ENCODE measurements at regions of chr13 and their contacts with region 1.

Region 1: DNA sequence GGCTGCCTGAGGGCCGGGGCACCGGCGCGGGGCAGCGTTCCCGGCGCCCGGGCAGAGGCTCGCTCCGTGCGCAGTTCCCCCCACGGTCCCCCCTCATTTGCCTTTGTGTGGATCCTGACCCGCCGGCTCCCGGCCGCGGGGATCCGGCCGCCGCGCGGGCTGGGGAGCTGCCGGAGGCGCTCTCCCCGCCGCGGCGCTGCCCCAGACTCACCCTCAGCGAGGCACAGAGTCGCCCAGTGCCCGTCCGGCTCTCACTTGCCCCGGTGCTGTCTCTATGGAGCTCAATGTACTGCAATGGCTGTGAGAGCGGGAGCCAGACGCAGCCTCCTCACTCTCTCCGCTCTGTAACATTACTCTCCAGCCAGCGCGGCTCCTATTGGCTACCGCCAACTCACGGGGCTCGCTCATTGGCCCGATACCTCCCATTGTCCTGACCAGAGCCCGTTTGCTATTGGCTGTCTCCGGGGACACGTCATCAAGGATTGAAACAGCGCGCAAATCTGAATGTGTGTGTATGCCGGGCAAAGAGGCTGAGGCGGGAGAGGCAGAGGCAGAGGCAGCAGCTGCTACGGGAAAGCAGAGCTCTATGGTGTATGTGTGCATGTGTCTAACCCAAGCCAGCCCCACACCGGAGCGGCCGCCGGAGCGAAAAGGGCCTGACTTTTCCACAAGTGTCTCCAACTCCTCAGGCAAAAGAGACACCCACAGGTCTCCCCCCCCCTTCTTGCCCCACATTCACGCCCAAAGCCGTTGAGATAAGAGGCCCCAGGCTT is at the start of gene HMGB1:
- DNase-seq: peak; percentile 97
- H3K4me3 Mint-ChIP-seq: peak within 1 kb of the TSS; percentile 94
- H3K27ac Mint-ChIP-seq: peak within 1 kb of the TSS; percentile 100
- H3K4me1 Mint-ChIP-seq: peaks cover 28% of the 10 kb centered on the region
- H3K27me3 Mint-ChIP-seq: no peaks in the 10 kb centered on the region
- total RNA-seq, gene HMGB1: 593 and 606 TPM in 2 replicates

Region 2: DNA sequence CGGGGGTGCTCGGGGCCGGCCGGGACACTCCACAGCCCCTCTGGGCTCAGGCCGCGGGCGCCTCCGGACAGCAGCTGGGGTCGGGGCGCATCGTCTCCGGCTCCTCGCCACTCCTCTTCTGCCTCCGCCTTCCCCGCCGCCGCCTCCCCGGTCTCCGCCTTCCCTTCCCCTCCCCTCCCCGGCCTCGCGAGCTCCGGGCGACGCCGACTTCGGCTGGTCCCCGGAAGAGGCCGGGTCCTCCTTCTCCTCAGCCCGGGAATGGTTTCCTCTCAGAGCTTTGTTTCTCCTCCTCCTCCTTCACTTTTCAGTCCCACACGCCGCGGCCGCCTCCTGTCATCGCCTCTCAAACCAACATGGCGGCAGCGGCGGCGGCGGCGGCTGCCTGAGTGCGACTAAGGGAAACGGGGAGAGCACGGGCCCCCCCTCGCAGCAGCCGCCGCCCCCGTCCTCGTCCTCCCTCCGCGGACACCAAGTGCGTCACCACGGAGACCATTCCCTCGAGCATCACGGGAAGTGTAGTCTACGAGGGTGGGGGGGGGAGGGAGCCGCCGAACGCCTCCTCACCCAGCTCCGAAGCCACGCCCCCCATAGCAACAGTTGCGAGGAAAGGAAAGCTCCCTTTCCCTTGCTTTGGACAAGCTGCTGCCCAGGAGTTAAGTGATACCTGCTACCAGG is 615.4 kb before region 1 on chr13 and contains the start of gene UBL3:
- intact Hi-C with region 1: loop called (anchors 2 kb)
- DNase-seq: peak; percentile 90
- H3K4me3 Mint-ChIP-seq: peak within 1 kb of the TSS; percentile 97
- H3K27ac Mint-ChIP-seq: peak within 1 kb of the TSS; percentile 98
- H3K4me1 Mint-ChIP-seq: peaks cover 50% of the 10 kb centered on the region
- H3K27me3 Mint-ChIP-seq: no peaks in the 10 kb centered on the region
- total RNA-seq, gene UBL3: 10.9 and 12.8 TPM in 2 replicates

Region 3: DNA sequence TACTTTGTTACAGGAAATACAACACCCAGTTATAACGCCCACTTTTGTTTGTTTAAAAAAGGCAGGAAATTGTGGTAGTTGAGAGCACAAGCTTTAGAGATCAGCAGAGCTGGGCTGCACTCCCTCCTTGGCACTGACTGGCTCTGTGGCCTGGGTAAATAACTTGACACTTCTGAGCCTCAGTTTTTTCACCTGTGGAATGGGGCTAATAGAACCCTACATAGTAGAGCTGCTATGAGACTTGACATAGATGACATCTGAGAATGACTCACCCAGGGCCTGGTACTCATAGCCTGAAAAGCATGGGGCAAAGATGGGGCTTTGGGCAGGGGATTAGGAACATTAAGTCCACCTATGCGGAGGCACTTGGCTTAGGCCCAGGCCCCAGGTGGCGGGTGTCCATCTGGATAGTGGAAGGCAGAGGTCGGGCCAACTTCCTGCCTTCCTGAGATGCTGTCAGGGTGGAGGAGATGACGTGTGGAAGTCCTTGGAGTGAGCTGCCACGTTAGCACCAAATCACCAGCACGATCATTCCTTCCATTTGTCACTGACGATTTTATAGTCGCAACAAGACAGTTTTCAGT is 317.5 kb before region 1 on chr13:
- intact Hi-C with region 1: loop called (anchors 1 kb)
- DNase-seq: peak; percentile 31
- H3K4me3 Mint-ChIP-seq: peak overlapping the region; percentile 65
- H3K27ac Mint-ChIP-seq: peak overlapping the region; percentile 83
- H3K4me1 Mint-ChIP-seq: peaks cover 96% of the 10 kb centered on the region
- H3K27me3 Mint-ChIP-seq: no peaks in the 10 kb centered on the region

Region 4: GRCh38 chr13:30370146-30370545 is 95.6 kb before region 1 on chr13:
- intact Hi-C with region 1: no loop called
- DNase-seq: no peak
- H3K4me3 Mint-ChIP-seq: peak overlapping the region; percentile 25
- H3K27ac Mint-ChIP-seq: peak overlapping the region; percentile 53
- H3K4me1 Mint-ChIP-seq: peaks cover 76% of the 10 kb centered on the region
- H3K27me3 Mint-ChIP-seq: no peaks in the 10 kb centered on the region

Region 5: DNA sequence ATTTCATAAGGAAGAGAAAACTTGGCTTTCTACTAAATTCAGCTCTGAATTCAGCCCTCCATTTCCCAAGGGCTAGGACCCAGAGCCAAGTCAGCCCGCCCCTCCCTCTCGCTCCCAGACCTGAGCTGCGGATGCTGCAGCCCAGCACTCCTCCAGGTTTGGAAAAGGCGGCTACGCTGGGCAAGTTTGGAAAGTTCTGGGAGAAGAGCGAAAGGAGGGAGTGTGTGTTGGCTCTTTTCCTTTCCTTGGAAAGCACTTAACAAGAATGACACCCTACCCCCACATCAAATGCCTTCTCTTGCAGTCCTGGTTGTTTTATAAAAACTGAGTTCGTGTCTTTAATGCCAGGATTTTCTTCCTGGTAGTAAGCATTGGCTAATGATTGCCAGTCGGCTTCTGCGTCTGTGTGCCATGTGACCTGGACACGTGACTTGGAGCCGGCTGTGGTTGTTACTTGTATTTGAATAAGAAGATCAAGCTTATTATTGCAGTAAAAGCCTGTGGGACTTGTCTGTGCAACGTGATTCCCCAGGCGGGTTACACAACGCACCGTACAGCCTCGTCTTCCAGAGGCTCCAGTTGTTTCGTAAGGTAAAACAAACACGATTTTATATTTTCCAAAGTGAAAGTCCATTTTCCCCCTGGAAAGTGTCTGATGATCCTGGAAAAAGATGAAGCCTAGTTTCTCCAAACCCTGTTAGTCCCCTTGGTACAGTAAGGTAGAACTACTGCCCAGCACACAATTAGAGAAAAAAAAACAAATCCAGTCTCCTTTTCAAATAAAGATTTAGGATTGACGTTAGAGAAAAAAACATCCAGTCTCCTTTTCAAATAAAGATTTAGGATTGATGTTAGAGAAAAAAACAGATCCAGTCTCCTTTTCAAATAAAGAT is 70.3 kb before region 1 on chr13:
- intact Hi-C with region 1: loop called (anchors 1 kb)
- DNase-seq: peak; percentile 52
- H3K4me3 Mint-ChIP-seq: peak overlapping the region; percentile 84
- H3K27ac Mint-ChIP-seq: peak overlapping the region; percentile 95
- H3K4me1 Mint-ChIP-seq: peaks cover 53% of the 10 kb centered on the region
- H3K27me3 Mint-ChIP-seq: no peaks in the 10 kb centered on the region

Region 6: DNA sequence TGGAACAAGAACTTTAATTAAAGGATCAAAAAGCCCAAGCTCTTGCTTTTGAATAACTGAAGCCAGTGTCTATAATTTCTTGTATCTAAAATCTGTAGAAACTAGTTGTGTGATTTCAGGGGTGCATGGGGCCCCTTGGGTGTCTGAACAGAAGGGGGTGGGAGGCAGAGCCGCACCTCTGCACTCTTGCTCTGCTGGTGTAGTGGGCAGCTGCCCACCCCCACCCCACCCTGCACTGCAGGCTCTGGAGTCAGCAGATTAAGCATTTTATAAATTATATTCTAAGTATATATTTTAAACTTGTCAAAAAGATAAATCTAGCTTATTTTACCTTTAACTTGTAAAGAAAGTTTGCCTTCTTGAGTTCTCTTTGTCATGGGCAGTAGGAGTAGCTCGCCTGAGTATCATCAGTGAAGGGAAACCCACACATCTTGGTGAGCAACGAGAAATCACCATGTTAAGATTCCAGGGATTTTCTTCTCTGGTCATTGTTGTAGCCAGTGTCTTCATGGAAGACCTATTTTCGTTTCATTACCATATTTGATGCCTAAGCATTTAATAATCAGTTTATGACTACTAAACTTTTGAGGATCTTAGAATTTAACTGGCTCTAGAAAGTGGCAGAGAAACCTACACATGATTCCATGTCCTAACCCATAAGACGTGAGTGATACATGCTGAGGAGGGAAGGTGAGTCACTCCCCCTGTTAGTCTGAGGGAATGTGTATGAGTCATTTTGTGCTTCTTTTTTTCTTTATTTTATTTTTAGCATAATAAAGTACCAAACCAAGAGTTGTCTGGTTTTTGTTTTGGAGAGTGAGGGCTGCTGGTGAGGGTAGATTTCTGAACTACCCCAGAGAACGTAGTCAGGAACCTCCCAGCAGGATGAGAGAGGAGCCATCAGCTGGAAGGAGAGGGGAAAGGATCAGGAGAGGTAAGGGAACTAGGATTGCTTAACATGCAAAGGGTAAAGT is 35.8 kb before region 1 on chr13:
- intact Hi-C with region 1: loop called (anchors 1 kb)
- DNase-seq: no peak
- H3K4me3 Mint-ChIP-seq: peak overlapping the region; percentile 75
- H3K27ac Mint-ChIP-seq: peak overlapping the region; percentile 97
- H3K4me1 Mint-ChIP-seq: peaks cover 29% of the 10 kb centered on the region
- H3K27me3 Mint-ChIP-seq: peaks cover 6% of the 10 kb centered on the region

Region 7: GRCh38 chr13:30673669-30674521 is 208.1 kb after region 1 on chr13:
- intact Hi-C with region 1: loop called (anchors 2 kb)
- DNase-seq: peak; percentile 80
- H3K4me3 Mint-ChIP-seq: peak overlapping the region; percentile 85
- H3K27ac Mint-ChIP-seq: peak overlapping the region; percentile 84
- H3K4me1 Mint-ChIP-seq: peaks cover 28% of the 10 kb centered on the region
- H3K27me3 Mint-ChIP-seq: peaks cover 22% of the 10 kb centered on the region

Region 8: GRCh38 chr13:31044377-31045285 is 578.9 kb after region 1 on chr13:
- intact Hi-C with region 1: loop called (anchors 2 kb)
- DNase-seq: peak; percentile 78
- H3K4me3 Mint-ChIP-seq: peak overlapping the region; percentile 67
- H3K27ac Mint-ChIP-seq: peak overlapping the region; percentile 89
- H3K4me1 Mint-ChIP-seq: peaks cover 14% of the 10 kb centered on the region
- H3K27me3 Mint-ChIP-seq: peaks cover 2% of the 10 kb centered on the region

Measured in activated T-helper 1 cell treated with anti-CD3 and anti-CD28 coated beads, Interleukin-12 subunit alpha, Interleukin-12 subunit beta, Interleukin-2, Interleukin-4 antibody, amounts not matched to agents 30 ng/mL and 10 ng/mL and 1 ng/mL, durations not matched to agents 14 hours and 24 hours and 36 hours (primary cell).